Activated naive CD4-positive, alpha-beta T cell treated with anti-CD3 and anti-CD28 coated beads for 36 hours (primary cell): ENCODE measurements at regions of chr10 and their contacts with region 1.

Region 1: DNA sequence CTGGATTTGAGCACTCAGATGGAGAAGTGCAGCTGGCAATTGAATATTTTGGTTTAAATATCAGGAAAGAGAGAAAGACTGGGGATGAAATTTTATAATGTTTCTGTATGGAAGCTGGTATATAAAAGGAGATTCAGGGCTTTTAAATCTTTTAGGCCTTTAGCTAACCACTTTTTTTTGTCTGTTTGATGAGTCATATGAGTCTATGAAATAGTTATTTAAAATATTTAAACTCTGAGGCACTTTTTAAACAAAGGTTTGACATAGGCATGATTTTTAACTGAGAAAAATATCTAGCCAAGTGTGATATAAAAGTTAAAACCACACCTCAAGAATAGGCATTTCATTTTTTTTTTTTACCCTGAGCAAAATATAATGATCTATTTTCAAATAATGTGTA is 944.3 kb downstream of the GATA3 start:
- DNase-seq: no peak
- H3K4me3 Mint-ChIP-seq: no peak overlapping the region
- H3K27ac Mint-ChIP-seq: no peak overlapping the region
- H3K4me1 Mint-ChIP-seq: peaks cover 2% of the 10 kb centered on the region
- H3K27me3 Mint-ChIP-seq: no peaks in the 10 kb centered on the region

Region 2: GRCh38 chr10:8577686-8578085 is 421.1 kb before region 1 on chr10:
- CTCF ChIA-PET with region 1: no interaction called
- intact Hi-C with region 1: loop called (anchors 10 kb)
- DNase-seq: peak; percentile 33
- H3K4me3 Mint-ChIP-seq: no peak overlapping the region
- H3K27ac Mint-ChIP-seq: no peak overlapping the region
- H3K4me1 Mint-ChIP-seq: peaks cover 28% of the 10 kb centered on the region
- H3K27me3 Mint-ChIP-seq: peaks cover 19% of the 10 kb centered on the region

Region 3: GRCh38 chr10:9294865-9295264 is 296.1 kb after region 1 on chr10:
- CTCF ChIA-PET with region 1: no interaction called
- intact Hi-C with region 1: loop called (anchors 10 kb)
- DNase-seq: peak; percentile 17
- H3K4me3 Mint-ChIP-seq: no peak overlapping the region
- H3K27ac Mint-ChIP-seq: no peak overlapping the region
- H3K4me1 Mint-ChIP-seq: peaks cover 17% of the 10 kb centered on the region
- H3K27me3 Mint-ChIP-seq: peaks cover 8% of the 10 kb centered on the region